ENCODE measurements at regions of chr1 and their contacts with region 1.

Region 1: DNA sequence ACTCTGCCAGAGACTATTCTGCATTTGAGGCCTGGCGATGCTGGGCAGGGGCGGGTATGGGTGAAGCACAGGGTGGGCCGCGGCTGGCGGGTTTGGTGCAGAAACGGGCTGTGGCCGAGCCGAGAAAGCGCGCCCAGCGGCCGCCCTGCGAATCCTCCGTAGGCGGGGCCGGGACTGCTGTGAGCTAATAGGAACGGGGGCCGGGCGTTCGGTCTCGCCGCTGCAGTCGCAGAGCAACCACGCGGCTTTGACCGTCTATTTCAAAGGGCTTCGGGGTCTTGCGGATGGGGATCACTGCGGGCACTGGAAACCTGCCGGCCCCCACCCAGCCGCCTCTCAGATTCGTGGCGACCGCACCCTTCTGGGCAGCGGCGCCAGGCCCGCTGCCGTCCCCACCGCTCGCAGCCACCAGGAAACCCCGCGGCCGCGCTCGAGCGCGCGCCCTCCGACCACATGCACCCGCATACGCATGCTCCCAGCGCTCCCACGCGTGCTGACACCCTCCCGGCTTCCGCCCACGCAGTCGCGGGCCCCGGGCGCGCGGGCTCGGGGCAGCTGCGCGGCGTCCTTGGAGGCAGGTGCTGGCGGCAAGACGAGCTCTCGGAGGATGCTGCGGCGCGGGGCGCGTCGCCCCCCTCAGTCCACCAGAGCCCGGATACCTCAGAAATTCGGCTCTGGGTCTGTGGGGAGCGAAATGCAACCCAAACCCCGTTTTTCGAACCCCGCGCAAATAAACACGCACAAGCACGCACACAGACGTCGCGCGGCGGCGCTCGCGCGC is 32.6 kb downstream of the DNTTIP2 start:
- DNase-seq: peak; percentile 93

Region 2: DNA sequence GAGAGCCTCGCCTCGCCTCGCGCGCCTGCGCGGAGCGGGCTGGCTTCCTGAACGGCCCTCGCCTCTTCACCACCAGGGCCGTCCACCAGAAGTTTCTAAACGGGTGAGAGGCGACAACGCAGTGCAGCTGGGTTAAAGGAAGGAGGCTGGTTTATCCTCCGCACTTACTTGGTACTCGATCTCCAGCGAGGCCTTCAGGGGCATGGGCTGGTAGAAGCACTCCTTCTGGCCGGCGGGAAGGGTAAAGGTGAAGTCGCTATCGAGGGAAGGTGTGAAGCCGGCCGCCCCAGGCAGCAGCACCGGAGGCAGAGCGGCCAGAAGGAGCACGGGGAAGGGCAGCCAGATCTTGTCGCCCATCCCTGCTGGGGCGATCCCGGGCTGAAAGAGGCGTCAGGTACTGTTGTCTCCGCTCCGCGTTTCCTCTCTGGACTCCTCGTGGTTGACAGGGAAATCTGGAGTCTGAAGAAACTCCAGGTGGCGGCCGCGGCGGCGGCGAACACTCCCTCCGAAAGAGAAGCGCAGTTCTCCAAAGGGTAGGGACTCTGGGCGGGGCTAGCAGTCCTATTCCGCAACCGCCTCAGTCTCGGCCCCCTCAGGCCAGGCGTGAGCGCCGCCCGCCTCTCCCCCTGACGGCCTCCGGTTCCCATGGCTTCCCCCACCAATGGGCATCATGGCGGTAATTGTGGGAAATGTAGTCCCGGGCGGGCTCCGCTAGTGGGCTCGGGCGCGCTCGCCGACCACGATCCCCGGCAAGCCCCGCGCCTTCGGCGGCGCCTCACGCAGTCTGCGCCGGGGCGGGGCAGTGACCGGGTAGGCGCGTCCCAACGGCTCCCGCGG is 666.3 kb before region 1 on chr1 and contains the start of gene TMED5:
- intact Hi-C with region 1: loop called (anchors 5 kb)
- DNase-seq: peak; percentile 99
- total RNA-seq, gene TMED5: 42.2 TPM

Region 3: GRCh38 chr1:93345633-93346420 is 500.6 kb before region 1 on chr1 and contains the start of gene DR1:
- intact Hi-C with region 1: loop called (anchors 5 kb)
- DNase-seq: peak; percentile 98
- total RNA-seq, gene DR1: 41.2 TPM

Region 4: GRCh38 chr1:93629099-93630059 is 217.0 kb before region 1 on chr1:
- intact Hi-C with region 1: loop called (anchors 1 kb)
- DNase-seq: no peak

Region 5: DNA sequence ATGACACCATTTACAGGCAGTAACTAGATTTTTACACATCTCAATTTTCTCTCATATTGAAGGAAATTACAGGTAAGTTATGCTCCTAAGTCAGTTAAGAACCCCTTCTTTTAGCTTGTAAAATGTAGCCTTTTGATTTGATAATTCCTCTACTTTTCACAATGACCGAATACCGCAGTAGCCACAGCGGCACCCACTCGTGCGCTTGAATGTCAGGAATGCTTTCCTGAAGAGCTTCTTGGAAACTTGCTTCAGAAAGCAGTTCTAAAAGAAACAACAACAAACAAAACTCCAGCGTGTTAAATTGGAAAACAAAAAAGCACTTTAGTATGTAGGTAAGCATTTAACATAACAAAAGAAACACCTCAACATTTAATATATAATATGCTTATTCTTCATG is 42.5 kb after region 1 on chr1:
- intact Hi-C with region 1: no loop called
- DNase-seq: no peak

Region 6: GRCh38 chr1:93909146-93910050 is 63.0 kb after region 1 on chr1 and contains the start of gene GCLM:
- intact Hi-C with region 1: loop called (anchors 5 kb)
- DNase-seq: peak; percentile 97
- total RNA-seq, gene GCLM: 10.5 TPM